ENCODE measurements at regions of chr12 and their contacts with region 1.

Region 1: DNA sequence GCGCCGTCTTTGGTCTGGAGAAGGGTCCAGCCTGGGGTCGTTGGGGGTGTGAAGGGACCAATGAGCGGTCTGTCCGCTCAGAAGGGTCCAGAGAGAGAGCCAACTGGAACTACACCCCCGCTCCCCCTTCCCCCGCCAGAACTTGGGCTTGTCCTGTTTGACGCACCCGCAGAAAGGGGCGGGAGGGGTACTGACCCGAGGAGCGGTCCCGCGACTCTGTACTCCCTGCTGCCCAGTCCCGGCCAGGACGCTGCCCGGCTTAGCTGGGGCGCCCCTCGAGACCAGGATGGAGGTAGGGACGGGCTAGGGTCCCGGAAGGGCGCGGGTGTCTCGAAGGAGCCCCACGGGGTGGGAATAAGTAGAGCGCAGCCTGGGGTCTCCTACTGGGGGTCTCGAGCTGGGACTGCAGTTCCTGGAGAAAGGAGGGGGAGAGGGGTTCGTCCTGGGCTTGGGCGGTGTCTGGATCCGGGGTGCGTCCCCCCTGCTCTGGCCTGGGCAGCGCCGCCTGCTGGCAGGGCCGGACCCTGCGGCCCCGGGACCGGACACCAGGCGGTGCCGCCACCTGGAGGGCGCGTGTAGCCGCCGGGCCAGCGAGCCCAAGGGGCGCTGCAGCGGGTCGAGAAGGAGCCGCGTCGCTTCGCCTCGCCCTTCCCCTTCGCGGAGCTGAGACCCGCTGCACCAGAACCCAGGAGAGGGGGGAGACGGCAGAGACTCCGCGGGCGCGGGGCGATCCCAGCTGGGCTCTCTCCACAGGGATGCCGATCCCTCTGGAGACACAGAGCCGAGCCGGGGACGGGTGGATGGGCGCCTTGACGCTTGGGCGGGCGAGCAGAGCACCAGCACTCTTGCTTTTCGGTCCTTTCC is 3.8 kb upstream of the CACNB3 start:
- DNase-seq: peak; percentile 96
- CTCF ChIP-seq: peak; percentile 100

Region 2: DNA sequence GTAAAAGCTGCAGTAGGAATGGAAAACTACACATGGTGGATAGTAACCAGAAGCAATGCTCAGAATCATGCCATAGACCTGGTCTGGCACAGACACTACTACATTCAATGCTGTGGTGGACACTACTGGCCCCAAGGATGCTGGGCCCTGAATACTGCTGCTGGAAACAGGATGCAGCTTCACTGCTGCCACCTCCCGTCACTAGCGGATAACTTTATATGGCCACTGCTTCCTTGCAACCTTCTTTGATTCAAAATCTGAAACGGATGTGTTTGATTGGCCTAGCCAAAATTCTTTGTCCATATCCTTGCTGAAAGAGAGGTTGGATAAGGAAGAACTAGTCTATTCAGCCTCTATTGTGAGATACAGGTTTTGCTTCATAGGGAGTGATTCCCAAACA is 56.3 kb before region 1 on chr12:
- CTCF ChIA-PET with region 1: interaction called, 30 read pairs
- POLR2A ChIA-PET with region 1: no interaction called
- DNase-seq: no peak
- CTCF ChIP-seq: no peak

Region 3: GRCh38 chr12:48803675-48804074 is 10.8 kb before region 1 on chr12:
- CTCF ChIA-PET with region 1: interaction called, 28 read pairs
- POLR2A ChIA-PET with region 1: no interaction called
- DNase-seq: no peak
- CTCF ChIP-seq: no peak

Region 4: GRCh38 chr12:48838048-48838447 is 23.6 kb after region 1 on chr12:
- CTCF ChIA-PET with region 1: interaction called, 16 read pairs
- POLR2A ChIA-PET with region 1: no interaction called
- DNase-seq: no peak
- CTCF ChIP-seq: no peak

Region 5: DNA sequence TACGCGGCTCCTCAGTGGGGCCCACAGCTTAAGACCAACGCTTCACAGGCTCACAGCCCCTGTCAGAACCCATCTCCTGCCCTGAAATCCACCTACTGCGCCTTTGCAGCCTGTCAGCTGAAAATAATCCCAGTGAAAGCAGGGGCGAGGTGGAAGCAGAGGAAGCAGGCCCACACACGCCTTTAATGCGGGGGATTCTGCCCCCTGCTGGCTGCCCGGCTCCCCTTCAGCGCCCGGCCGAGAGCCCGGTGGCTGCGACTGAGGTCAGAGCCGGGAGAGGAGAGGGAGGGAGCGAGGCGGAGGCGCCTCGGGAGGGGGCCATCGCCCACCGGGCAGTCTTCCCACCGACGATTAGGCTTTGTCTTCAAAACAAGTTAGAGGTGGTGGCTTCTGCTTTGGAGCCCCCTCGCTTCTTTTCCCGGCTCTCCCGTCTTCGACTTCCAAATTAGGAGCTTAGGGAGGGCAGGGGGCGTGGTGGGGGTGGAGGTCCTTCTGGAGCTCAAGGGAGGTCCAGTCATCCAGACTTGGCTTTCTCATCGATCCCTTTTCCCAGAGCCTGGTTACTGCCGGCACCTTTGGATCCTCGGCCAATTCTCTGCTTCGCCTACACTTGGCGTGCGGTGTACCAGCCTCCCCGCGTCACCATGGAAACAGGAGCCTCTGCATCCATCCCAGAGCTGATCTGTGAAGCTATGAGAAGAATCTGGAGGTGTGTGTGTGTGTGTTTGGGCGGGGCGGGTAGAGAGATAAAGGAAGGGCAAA is 76.3 kb after region 1 on chr12:
- CTCF ChIA-PET with region 1: interaction called, 21 read pairs
- POLR2A ChIA-PET with region 1: no interaction called
- DNase-seq: peak; percentile 83
- CTCF ChIP-seq: peak; percentile 85

Measured in GM10248 (cell line).